ENCODE measurements at regions of chr5 and their contacts with region 1.

Region 1: GRCh38 chr5:149222914-149223848 is 48.5 kb upstream of the AFAP1L1 start:
- DNase-seq: no peak
- ATAC-seq: peak; percentile 34
- H3K4me3 ChIP-seq: no peak overlapping the region
- H3K4me3 Mint-ChIP-seq: no peak overlapping the region
- H3K27ac ChIP-seq: no peak overlapping the region
- H3K27ac Mint-ChIP-seq: no peak overlapping the region
- H3K4me1 ChIP-seq: no peaks in the 10 kb centered on the region
- H3K4me1 Mint-ChIP-seq: peaks cover 0 to 3% (median 0%) of the 10 kb centered on the region in 7 donors
- H3K27me3 ChIP-seq: no peaks in the 10 kb centered on the region
- H3K27me3 Mint-ChIP-seq: peaks cover 0 to 4% (median 2%) of the 10 kb centered on the region in 5 donors

Region 2: DNA sequence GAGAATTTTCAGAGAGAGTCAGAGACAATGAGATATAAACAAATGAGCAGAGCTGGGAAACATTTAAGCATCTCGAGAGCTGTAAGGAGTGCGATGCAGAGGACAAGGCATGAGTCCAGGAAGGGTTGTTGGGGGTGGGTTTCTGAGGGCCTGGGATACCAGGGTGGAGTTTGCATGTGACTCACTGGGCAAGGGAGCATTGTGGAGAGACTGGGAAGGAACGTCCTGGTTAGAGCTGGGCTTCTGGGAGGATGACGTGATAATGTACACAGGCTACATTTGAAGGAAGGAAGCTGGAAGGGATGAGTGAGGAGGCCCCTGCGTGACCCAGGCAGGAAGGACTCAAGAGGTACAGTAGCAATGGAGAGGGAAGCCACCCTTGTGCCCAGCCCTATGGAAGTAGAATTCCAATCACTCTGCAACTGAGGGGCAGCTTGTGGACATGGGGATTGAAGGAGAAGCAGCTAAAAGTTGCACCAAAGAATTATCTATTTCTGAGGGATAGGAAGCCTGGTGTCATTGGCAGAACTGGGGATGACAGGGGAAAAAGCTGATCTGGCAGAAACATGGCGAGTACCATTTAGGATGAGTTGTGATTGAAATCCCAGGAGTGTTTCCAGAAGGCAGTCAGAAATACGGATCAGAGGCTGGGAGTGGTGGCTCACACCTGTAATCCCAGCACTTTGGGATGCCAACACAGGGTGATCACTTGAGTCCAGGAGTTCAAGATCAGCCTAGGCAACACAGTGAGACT is 10.8 kb before region 1 on chr5:
- CTCF ChIA-PET with region 1: interaction called, 10 read pairs
- POLR2A ChIA-PET with region 1: no interaction called
- intact Hi-C with region 1: no loop called
- DNase-seq: no peak
- ATAC-seq: no peak
- H3K4me3 ChIP-seq: no peak overlapping the region
- H3K4me3 Mint-ChIP-seq: no peak overlapping the region
- H3K27ac ChIP-seq: no peak overlapping the region
- H3K27ac Mint-ChIP-seq: peak overlapping the region in 3 of 9 donors; percentile 3 to 24 (median 17)
- H3K4me1 ChIP-seq: no peaks in the 10 kb centered on the region
- H3K4me1 Mint-ChIP-seq: peaks cover 0 to 19% (median 11%) of the 10 kb centered on the region in 7 donors
- H3K27me3 ChIP-seq: no peaks in the 10 kb centered on the region
- H3K27me3 Mint-ChIP-seq: peaks cover 0 to 1% (median 0%) of the 10 kb centered on the region in 5 donors